CD8-positive, alpha-beta T cell (primary cell): ENCODE measurements at regions of chr7 and their contacts with region 1.

Region 1: DNA sequence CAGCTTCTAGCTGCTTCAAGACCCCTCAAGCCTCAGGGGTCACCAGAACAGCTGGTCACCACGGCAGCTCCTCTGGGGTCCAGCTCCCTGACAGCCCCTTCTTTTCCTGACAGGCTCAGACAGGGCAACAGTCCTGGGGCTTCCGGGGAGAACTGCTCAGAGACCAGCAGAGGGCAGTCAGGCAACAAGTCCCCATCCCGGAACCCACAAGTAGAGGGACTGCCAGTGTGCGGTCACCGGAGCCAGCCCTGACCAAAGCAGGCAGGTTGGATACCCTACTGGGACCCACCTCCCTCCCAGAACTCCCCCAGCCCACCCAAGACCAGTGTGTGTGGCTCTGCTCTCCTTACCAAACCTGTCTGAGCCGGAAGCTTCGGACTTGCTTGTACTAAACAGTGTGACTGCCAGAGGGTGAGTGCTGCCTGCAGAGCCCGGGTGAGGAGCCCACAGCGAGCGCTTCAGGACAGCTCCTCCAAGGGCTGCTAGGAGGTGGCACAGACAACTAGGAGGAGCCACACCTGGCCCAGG is 40.3 kb downstream of the YKT6 start:
- DNase-seq: peak; percentile 15 to 77 (median 57)
- ATAC-seq: peak; percentile 86
- H3K4me3 ChIP-seq: no peak overlapping the region
- H3K4me3 Mint-ChIP-seq: peak overlapping the region; percentile 54
- H3K27ac ChIP-seq: no peak overlapping the region
- H3K27ac Mint-ChIP-seq: no peak overlapping the region
- H3K4me1 ChIP-seq: peaks cover 7% of the 10 kb centered on the region
- H3K4me1 Mint-ChIP-seq: no peaks in the 10 kb centered on the region
- H3K27me3 ChIP-seq: no peaks in the 10 kb centered on the region
- H3K27me3 Mint-ChIP-seq: no peaks in the 10 kb centered on the region
- CTCF ChIP-seq: peak; percentile 56

Region 2: DNA sequence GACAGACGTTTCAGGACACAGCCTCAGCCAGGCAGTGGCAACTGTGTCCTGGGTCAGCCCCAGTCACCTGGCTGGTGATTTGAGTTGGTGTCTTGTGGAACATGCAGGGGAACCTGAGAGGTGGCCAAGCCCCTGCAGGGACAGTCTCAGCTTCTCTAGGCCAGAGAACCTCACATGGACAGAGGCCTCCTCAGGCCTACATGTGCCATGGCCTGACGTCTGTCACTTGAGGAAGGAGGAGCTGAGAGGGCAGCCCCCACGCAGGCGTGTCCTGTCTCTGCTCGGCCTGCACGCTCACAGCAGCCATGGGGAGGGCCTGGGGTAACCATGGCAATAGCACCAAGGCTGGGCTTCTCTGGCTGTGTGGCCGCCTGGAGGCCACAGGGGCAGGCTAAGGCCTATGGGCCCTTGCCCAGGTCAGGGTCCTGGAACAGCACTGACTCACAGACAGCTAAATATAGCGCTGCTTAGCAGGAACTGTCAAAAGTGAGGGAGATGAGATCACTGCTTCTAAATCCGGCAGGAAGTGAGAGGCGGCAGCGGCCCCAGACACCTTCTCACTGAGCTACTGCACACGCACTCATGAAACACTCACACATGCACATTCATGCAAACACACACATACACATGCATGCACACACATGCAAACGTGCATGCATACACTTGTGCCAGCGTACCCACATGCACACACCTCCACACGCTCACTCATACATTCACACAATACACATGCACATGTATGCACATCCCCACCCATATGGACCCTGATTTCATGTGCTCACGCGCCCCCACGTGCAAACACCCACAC is 16.8 kb after region 1 on chr7:
- CTCF ChIA-PET with region 1: interaction called, 26 read pairs
- POLR2A ChIA-PET with region 1: no interaction called
- intact Hi-C with region 1: no loop called
- DNase-seq: peak; percentile 24 to 80 (median 65)
- ATAC-seq: peak; percentile 91
- H3K4me3 ChIP-seq: peak overlapping the region in 1 of 2 experiments; percentile 4
- H3K4me3 Mint-ChIP-seq: peak overlapping the region; percentile 61
- H3K27ac ChIP-seq: peak overlapping the region; percentile 69 to 86
- H3K27ac Mint-ChIP-seq: peak overlapping the region; percentile 88
- H3K4me1 ChIP-seq: peaks cover 31% of the 10 kb centered on the region
- H3K4me1 Mint-ChIP-seq: peaks cover 23% of the 10 kb centered on the region
- H3K27me3 ChIP-seq: no peaks in the 10 kb centered on the region
- H3K27me3 Mint-ChIP-seq: no peaks in the 10 kb centered on the region
- CTCF ChIP-seq: no peak

Region 3: GRCh38 chr7:44305564-44306507 is 64.8 kb after region 1 on chr7:
- CTCF ChIA-PET with region 1: no interaction called
- POLR2A ChIA-PET with region 1: no interaction called
- intact Hi-C with region 1: no loop called
- DNase-seq: peak in 2 of 9 experiments; percentile 2 to 23
- ATAC-seq: no peak
- H3K4me3 ChIP-seq: no peak overlapping the region
- H3K4me3 Mint-ChIP-seq: no peak overlapping the region
- H3K27ac ChIP-seq: peak overlapping the region in 1 of 2 experiments; percentile 53
- H3K27ac Mint-ChIP-seq: no peak overlapping the region
- H3K4me1 ChIP-seq: peaks cover 9% of the 10 kb centered on the region
- H3K4me1 Mint-ChIP-seq: peaks cover 4% of the 10 kb centered on the region
- H3K27me3 ChIP-seq: peaks cover 3 to 4% of the 10 kb centered on the region in 2 experiments
- H3K27me3 Mint-ChIP-seq: peaks cover 9% of the 10 kb centered on the region
- CTCF ChIP-seq: no peak

Region 4: DNA sequence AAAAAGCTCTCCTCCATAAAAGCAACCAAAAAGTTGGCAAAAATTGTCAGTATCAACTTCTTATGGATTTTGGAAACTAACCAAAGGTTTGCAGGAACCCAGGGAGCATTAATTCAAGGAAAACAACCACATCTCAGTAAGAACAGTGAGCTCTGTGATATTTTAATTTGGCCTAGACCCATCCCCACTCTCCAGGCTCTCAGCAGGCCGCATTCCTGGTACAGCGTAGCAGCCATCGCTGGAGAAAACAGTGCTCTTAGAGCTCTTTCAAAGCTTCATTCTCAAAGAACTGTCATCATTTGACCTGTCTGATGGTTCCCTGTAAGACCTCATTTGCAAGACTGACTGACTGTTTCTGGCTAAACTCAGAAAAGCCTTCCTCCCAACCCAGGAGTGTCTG is 167.5 kb after region 1 on chr7:
- CTCF ChIA-PET with region 1: no interaction called
- POLR2A ChIA-PET with region 1: no interaction called
- intact Hi-C with region 1: loop called in 1 of 2 experiments (anchors 10 kb)
- DNase-seq: no peak
- ATAC-seq: no peak
- H3K4me3 ChIP-seq: no peak overlapping the region
- H3K4me3 Mint-ChIP-seq: no peak overlapping the region
- H3K27ac ChIP-seq: no peak overlapping the region
- H3K27ac Mint-ChIP-seq: peak overlapping the region; percentile 49
- H3K4me1 ChIP-seq: no peaks in the 10 kb centered on the region
- H3K4me1 Mint-ChIP-seq: peaks cover 26% of the 10 kb centered on the region
- H3K27me3 ChIP-seq: no peaks in the 10 kb centered on the region
- H3K27me3 Mint-ChIP-seq: no peaks in the 10 kb centered on the region
- CTCF ChIP-seq: no peak

Region 5: GRCh38 chr7:44565097-44565794 is 324.2 kb after region 1 on chr7:
- CTCF ChIA-PET with region 1: interaction called, 31 read pairs
- POLR2A ChIA-PET with region 1: no interaction called
- intact Hi-C with region 1: loop called in 1 of 2 experiments (anchors 1 kb)
- DNase-seq: peak; percentile 40 to 78 (median 65)
- ATAC-seq: peak; percentile 97
- H3K4me3 ChIP-seq: no peak overlapping the region
- H3K4me3 Mint-ChIP-seq: no peak overlapping the region
- H3K27ac ChIP-seq: no peak overlapping the region
- H3K27ac Mint-ChIP-seq: no peak overlapping the region
- H3K4me1 ChIP-seq: no peaks in the 10 kb centered on the region
- H3K4me1 Mint-ChIP-seq: peaks cover 10% of the 10 kb centered on the region
- H3K27me3 ChIP-seq: no peaks in the 10 kb centered on the region
- H3K27me3 Mint-ChIP-seq: no peaks in the 10 kb centered on the region
- CTCF ChIP-seq: peak; percentile 93